ENCODE measurements at regions of chr20 and their contacts with region 1.

Region 1: GRCh38 chr20:8389381-8390036 is 257.4 kb downstream of the PLCB1 start:
- DNase-seq: peak; percentile 7 to 14
- H3K4me3 ChIP-seq: no peak overlapping the region
- H3K27ac ChIP-seq: no peak overlapping the region
- H3K4me1 ChIP-seq: peaks cover 5 to 15% of the 10 kb centered on the region in 2 donors
- H3K27me3 ChIP-seq: no peaks in the 10 kb centered on the region
- CTCF ChIP-seq: peak; percentile 23 to 66 (median 47)
- POLR2A ChIP-seq: no peak

Region 2: GRCh38 chr20:8131598-8132483 is 257.7 kb before region 1 on chr20 and contains the start of gene PLCB1:
- intact Hi-C with region 1: loop called (anchors 10 kb)
- DNase-seq: peak; percentile 80 to 82
- H3K4me3 ChIP-seq: peak within 1 kb of the TSS in 2 of 3 donors; percentile 35 to 44
- H3K27ac ChIP-seq: peak within 1 kb of the TSS in 2 of 3 donors; percentile 50 to 53
- H3K4me1 ChIP-seq: peaks cover 7 to 10% of the 10 kb centered on the region in 2 donors
- H3K27me3 ChIP-seq: no peaks in the 10 kb centered on the region
- CTCF ChIP-seq: peak; percentile 68 to 97 (median 77)
- POLR2A ChIP-seq: no peak
- total RNA-seq, gene PLCB1: 7.3 to 14.1 (median 11.0) TPM

Region 3: DNA sequence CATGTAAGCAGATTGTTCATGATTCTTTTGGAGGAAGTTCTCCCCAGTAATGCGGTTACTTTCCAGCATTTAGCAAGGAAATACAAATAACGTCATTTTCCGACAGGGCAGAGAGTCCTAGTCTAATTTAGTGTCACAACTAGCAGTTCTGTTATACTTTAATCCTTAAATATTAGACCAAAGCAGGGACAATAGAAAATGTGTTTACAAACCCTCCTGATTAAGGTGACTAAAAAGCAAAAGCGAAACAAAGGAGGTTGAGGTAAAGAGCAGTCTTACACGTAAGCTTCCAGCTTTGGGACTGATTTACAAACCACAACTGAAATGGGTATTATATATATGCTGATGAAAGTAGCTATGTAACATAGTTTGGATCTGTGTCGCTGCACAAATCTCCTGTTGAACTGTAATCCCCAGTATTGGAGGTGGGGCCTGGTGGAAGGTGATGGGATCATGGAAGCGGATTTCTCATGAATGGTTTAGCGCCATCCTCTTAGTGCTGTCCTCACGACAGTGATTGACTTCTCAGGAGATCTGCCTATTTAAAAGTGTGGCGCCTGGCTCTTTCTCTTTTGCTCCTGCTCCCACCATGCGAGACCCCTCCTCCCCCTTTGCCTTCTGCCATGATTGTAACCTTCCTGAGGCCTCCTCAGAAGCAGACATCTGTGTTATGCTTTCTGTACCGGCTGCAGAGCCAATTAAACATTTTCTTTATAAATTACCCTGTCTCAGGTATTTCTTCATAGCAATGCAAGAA is 175.5 kb before region 1 on chr20:
- intact Hi-C with region 1: no loop called
- DNase-seq: no peak
- H3K4me3 ChIP-seq: no peak overlapping the region
- H3K27ac ChIP-seq: no peak overlapping the region
- H3K4me1 ChIP-seq: peaks cover 6 to 7% of the 10 kb centered on the region in 2 donors
- H3K27me3 ChIP-seq: no peaks in the 10 kb centered on the region
- CTCF ChIP-seq: no peak
- POLR2A ChIP-seq: no peak